ENCODE measurements at regions of chr22 and their contacts with region 1.

Region 1: GRCh38 chr22:28594797-28595462 is 84.7 kb downstream of the TTC28 start:
- DNase-seq: peak; percentile 59
- H3K4me3 ChIP-seq: no peak overlapping the region
- CTCF ChIP-seq: peak; percentile 50

Region 2: GRCh38 chr22:28829358-28830181 is 234.6 kb after region 1 on chr22:
- in situ Hi-C with region 1: loop called (anchors 10 kb)
- DNase-seq: peak; percentile 47
- H3K4me3 ChIP-seq: no peak overlapping the region
- CTCF ChIP-seq: peak; percentile 94